Activated naive CD4-positive, alpha-beta T cell treated with anti-CD3 and anti-CD28 coated beads for 36 hours (primary cell): ENCODE measurements at regions of chr20 and their contacts with region 1.

Region 1: DNA sequence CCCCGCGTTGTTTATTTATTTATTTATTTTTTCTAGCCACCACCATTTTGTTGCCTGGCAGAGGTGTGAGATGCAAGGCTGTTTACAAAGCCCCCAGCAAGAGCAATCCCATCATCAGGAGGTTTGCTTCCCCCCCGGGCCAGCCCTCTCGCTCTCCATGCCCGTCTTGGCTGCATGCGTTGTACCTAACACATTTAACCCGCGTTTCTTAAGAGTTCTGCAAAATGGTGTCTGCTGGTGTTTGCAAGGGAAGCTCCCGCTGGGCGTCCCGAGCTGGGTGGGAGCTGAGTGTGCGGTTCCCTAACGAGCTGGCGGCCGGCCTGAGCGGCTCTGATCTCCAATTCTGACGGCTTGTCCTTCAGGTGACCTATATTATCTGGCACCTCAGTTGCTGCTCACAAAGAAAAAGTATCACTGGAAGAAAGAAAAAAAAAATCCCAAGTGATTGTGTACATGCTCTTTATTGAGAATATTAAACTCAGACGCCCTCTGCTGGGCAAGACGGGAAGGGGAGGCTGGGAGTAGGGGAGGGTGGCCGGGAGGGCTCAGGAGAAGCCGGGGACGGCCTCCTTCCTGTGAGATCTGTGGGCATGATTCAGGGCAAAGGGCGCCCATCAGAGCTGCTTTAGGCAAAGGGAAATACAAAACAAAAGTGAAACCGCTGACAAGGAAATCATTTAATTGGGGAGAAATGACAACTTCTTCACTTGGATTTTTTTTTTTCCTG is 154.8 kb downstream of the BCAS1 start:
- DNase-seq: peak; percentile 100
- H3K4me3 Mint-ChIP-seq: peak overlapping the region; percentile 93
- H3K27ac Mint-ChIP-seq: peak overlapping the region; percentile 84
- H3K4me1 Mint-ChIP-seq: peaks cover 47% of the 10 kb centered on the region
- H3K27me3 Mint-ChIP-seq: no peaks in the 10 kb centered on the region

Region 2: GRCh38 chr20:53547664-53548239 is 367.9 kb before region 1 on chr20:
- CTCF ChIA-PET with region 1: interaction called, 11 read pairs
- intact Hi-C with region 1: no loop called
- DNase-seq: peak; percentile 70
- H3K4me3 Mint-ChIP-seq: no peak overlapping the region
- H3K27ac Mint-ChIP-seq: no peak overlapping the region
- H3K4me1 Mint-ChIP-seq: peaks cover 2% of the 10 kb centered on the region
- H3K27me3 Mint-ChIP-seq: no peaks in the 10 kb centered on the region

Region 3: DNA sequence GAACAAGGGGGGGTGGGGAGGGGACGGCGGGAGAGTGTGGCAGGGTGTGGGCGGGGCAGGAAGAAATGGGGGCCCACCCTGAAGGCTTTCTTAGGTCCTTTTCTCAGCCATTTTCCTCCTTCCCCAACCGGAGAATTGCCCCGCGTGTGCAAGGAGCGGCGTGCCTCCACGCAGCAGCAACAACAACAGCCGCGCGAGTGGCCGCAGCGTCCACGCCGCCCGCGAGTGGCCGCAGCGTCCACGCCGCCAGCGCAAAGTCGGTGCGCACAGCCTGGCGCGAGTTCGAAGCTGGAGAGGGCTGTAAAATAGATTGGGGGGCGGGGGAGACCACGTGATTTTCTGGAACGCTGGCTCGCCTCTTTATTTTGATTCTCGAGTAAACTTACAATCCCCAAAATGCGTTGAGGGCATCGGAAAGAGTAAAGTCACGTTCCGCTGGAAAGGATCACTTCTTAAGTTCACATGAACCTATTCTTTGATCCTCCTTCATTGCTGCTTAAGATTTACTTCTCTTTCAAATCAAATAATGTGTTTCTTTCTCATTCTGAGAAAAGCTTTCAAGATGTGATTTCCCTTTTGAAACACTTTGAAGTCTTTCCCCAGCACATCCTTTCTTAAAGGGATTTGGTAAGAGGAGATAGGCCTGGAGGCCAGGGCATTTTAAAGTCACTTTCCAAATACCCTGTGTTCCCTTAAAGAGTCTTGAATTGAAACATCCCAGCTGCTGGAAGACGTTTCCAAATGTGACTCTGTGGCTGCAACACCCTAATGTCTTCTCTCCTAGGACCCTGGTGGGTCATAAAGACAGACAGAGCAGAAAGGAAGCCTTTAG is 255.3 kb before region 1 on chr20:
- CTCF ChIA-PET with region 1: interaction called, 3 read pairs
- intact Hi-C with region 1: loop called (anchors 5 kb)
- DNase-seq: peak; percentile 56
- H3K4me3 Mint-ChIP-seq: peak overlapping the region; percentile 77
- H3K27ac Mint-ChIP-seq: peak overlapping the region; percentile 88
- H3K4me1 Mint-ChIP-seq: peaks cover 61% of the 10 kb centered on the region
- H3K27me3 Mint-ChIP-seq: no peaks in the 10 kb centered on the region

Region 4: GRCh38 chr20:53834062-53834442 is 81.6 kb before region 1 on chr20:
- CTCF ChIA-PET with region 1: interaction called, 8 read pairs
- intact Hi-C with region 1: loop called (anchors 2 kb)
- DNase-seq: no peak
- H3K4me3 Mint-ChIP-seq: no peak overlapping the region
- H3K27ac Mint-ChIP-seq: no peak overlapping the region
- H3K4me1 Mint-ChIP-seq: peaks cover 53% of the 10 kb centered on the region
- H3K27me3 Mint-ChIP-seq: no peaks in the 10 kb centered on the region

Region 5: GRCh38 chr20:53883098-53883811 is 32.4 kb before region 1 on chr20:
- CTCF ChIA-PET with region 1: interaction called, 12 read pairs
- intact Hi-C with region 1: no loop called
- DNase-seq: peak; percentile 25
- H3K4me3 Mint-ChIP-seq: no peak overlapping the region
- H3K27ac Mint-ChIP-seq: no peak overlapping the region
- H3K4me1 Mint-ChIP-seq: peaks cover 50% of the 10 kb centered on the region
- H3K27me3 Mint-ChIP-seq: no peaks in the 10 kb centered on the region

Region 6: DNA sequence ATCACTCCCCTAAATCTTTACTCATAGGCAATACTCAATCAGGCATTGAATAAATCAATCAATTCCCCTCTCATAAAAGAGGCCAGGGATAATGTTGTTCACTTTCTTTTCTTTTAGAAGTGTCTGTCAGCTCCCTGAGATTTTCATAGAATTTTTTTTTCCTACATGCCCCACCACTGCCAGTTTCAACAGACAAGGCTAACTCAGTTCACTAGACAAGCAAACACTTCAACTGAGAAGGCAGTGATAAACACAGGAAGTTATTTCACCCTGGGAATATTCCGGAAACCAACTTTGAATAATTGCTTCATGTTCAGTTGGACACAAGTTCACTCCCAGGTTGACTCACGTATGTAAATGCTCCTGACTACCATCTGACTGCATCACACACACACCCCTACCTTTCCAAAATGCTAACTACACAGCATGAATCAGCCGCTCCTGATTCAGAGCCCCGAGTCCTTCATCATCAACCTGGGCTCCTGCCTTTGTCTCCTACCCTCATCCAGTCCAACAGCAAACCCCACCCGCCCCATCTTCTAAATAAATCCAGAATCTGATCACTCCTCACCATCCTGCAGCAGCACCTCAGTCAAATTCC is 10.9 kb after region 1 on chr20:
- CTCF ChIA-PET with region 1: interaction called, 26 read pairs
- intact Hi-C with region 1: no loop called
- DNase-seq: peak; percentile 66
- H3K4me3 Mint-ChIP-seq: no peak overlapping the region
- H3K27ac Mint-ChIP-seq: peak overlapping the region; percentile 36
- H3K4me1 Mint-ChIP-seq: peaks cover 34% of the 10 kb centered on the region
- H3K27me3 Mint-ChIP-seq: no peaks in the 10 kb centered on the region

Region 7: GRCh38 chr20:54250691-54251090 is 335.1 kb after region 1 on chr20:
- CTCF ChIA-PET with region 1: no interaction called
- intact Hi-C with region 1: no loop called
- DNase-seq: no peak
- H3K4me3 Mint-ChIP-seq: no peak overlapping the region
- H3K27ac Mint-ChIP-seq: no peak overlapping the region
- H3K4me1 Mint-ChIP-seq: no peaks in the 10 kb centered on the region
- H3K27me3 Mint-ChIP-seq: no peaks in the 10 kb centered on the region